ENCODE measurements at regions of chr3 and their contacts with region 1.

Region 1: GRCh38 chr3:50519471-50520089 is 16.1 kb upstream of the CACNA2D2 start:
- DNase-seq: peak; percentile 41
- ATAC-seq: peak; percentile 70
- H3K4me3 ChIP-seq: no peak overlapping the region
- H3K27ac ChIP-seq: no peak overlapping the region
- H3K4me1 ChIP-seq: peaks cover 25% of the 10 kb centered on the region
- H3K27me3 ChIP-seq: peaks cover 3 to 27% of the 10 kb centered on the region in 2 experiments; a peak in 3 of 5 replicates
- CTCF ChIP-seq: peak; percentile 91
- EP300 ChIP-seq: no peak
- POLR2A ChIP-seq: no peak
- RAD21 ChIP-seq: peak; percentile 36; the same call in 1 of the 2 replicates

Region 2: DNA sequence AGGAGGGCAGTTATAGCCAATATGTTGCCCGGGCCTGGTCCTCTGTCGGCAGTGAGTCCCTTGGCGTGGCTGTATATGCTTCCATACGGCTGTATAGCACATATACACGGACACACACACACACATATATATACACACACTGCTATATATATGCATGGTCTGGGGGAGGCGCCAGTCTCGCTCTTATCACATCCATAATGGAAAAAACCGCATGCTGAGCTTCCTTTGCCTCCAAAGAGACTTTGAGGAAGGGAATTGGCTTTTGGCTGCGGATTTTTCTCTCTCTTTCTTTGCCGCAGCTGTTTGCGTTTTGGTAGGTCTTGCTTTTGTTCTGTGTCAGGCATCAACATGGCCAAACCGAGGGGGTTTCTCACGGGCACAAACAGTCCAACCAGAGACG is 149.0 kb before region 1 on chr3:
- CTCF ChIA-PET with region 1: no interaction called
- POLR2A ChIA-PET with region 1: no interaction called
- in situ Hi-C with region 1: no loop called
- intact Hi-C with region 1: loop called (anchors 5 kb)
- DNase-seq: no peak
- ATAC-seq: peak; percentile 32; the same call in 2 of the 3 replicates
- H3K4me3 ChIP-seq: no peak overlapping the region
- H3K27ac ChIP-seq: no peak overlapping the region
- H3K4me1 ChIP-seq: peaks cover 7% of the 10 kb centered on the region
- H3K27me3 ChIP-seq: peaks cover 11 to 67% of the 10 kb centered on the region in 2 experiments; a peak in 4 of 5 replicates
- CTCF ChIP-seq: peak; percentile 49
- EP300 ChIP-seq: no peak
- POLR2A ChIP-seq: no peak
- RAD21 ChIP-seq: no peak

Region 3: DNA sequence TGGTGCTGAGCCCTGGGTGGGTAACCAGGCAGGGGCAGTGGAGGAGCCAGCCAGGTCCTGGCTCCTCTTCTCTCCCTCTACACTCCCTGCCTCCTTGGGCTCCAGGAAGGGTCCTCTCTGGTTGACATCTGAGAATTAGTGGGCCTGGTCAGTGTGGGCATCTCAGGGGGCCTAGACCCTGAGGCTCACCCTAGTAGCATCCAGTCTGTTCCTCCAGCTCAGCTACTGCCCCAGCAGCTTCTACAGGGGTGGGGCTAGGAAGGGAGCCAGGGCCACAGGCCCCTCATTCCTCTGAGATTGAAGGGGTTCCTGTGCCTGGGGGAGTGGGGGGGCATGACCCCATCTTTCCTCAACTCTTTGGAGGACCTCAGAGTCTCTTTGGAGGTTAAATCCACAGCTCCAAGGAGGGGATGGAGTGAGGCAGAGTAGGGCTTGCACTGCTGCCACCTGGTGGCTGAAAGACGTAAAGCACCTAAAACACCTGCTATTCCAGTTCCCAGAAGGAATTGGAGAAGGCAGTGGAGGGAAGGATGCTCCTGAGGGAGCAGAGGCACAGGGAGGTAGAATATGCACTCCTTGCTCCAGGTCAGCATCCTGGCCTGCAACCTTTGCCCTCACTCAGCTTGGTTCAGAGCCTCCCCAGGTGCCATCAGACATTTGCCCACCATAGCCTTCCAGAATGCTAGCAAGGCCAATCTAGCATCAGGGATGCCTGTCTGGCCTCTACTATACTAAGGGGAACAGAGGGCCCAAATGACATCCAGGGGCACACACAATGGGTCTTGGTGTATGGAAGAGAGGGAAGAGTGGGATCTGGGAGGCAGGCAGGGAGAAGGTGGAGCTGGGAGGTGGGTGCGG is 22.8 kb after region 1 on chr3:
- CTCF ChIA-PET with region 1: interaction called, 8 read pairs
- POLR2A ChIA-PET with region 1: no interaction called
- in situ Hi-C with region 1: no loop called
- intact Hi-C with region 1: loop called (anchors 1 kb)
- DNase-seq: peak; percentile 40
- ATAC-seq: peak; percentile 77
- H3K4me3 ChIP-seq: no peak overlapping the region
- H3K27ac ChIP-seq: no peak overlapping the region
- H3K4me1 ChIP-seq: no peaks in the 10 kb centered on the region
- H3K27me3 ChIP-seq: peaks cover 0 to 27% of the 10 kb centered on the region in 2 experiments; a peak in 3 of 5 replicates
- CTCF ChIP-seq: peak; percentile 90
- EP300 ChIP-seq: no peak
- POLR2A ChIP-seq: no peak
- RAD21 ChIP-seq: peak; percentile 63

Measured in HepG2 (cell line).